ENCODE measurements at regions of chr12 and their contacts with region 1.

Region 1: DNA sequence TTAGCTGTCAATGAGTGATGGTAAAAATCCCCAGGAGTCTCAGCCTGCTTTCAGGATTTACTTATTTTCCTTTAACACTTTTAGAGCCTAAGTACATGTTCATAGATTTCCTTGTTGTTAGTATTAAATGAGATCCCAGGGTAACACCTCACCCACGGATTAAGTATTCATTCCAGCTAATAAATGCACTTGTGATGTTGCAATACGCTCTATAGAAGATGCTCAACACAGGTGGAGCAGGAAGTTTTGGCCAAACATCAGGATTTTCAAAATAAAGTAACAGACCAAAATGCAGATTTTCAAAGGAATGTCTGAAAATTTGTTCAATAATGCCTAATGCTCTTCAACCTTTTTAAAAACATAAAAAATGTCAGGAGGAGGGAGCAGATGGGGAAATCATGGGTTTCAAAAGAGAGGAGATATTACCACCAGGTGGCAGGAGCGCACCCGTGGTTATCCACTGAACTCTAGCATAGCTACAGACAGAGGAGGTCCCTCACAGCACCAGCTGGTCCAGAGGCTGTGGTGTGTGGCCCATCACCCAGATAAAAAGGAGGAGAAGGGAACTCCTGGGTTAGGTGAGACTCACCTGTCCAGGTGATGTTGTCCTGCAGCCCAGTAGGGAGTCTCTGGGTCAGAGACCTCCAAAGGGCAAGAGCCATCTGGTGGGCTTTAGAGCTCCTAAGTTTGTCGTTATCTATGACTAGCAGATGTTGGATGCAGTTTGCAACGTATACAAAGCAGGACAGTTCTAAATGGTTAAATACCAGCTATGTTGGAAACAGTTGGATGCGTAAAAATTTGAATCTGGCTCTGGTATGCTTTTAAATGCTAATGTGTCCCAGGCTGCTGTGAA is 1158.4 kb upstream of the TMEM132C start:
- DNase-seq: peak; percentile 60
- H3K4me3 ChIP-seq: no peak overlapping the region
- H3K27ac ChIP-seq: peak overlapping the region; percentile 21
- H3K4me1 ChIP-seq: peaks cover 17% of the 10 kb centered on the region
- H3K27me3 ChIP-seq: no peaks in the 10 kb centered on the region
- CTCF ChIP-seq: peak; percentile 61 to 77

Region 2: GRCh38 chr12:126926023-126926594 is 182.5 kb before region 1 on chr12:
- CTCF ChIA-PET with region 1: interaction called, 5 read pairs
- dilution Hi-C with region 1: no loop called
- in situ Hi-C with region 1: no loop called
- intact Hi-C with region 1: loop called (anchors 5 kb)
- DNase-seq: peak; percentile 4
- H3K4me3 ChIP-seq: no peak overlapping the region
- H3K27ac ChIP-seq: no peak overlapping the region
- H3K4me1 ChIP-seq: no peaks in the 10 kb centered on the region
- H3K27me3 ChIP-seq: no peaks in the 10 kb centered on the region
- CTCF ChIP-seq: peak in 1 of 2 donors; percentile 44

Region 3: DNA sequence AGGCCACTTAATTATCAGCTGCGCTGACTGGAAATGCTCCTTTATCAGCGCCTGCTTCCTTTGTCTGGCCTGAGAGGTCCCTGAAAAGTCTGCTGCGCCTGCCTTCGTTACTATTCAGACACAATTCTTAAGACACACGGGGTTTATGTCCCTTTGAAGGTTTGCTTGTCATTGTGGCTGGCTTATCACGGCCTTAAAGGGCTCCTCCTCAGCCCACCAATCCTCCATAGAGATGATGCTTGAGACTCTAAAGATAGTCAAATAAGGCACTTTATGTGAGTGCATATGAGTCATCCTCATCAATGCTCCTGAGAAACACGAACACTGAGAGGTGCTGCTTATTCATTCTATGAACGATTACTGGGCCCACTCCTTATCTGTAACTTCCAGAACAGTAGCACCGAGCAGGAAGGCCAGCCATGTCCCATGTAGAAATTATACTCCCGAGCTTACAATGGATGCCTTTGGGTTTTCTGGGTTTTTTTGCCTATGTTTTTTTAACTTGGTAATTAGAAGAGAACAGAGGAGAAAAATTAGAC is 109.8 kb before region 1 on chr12:
- CTCF ChIA-PET with region 1: no interaction called
- dilution Hi-C with region 1: no loop called
- in situ Hi-C with region 1: no loop called
- intact Hi-C with region 1: no loop called
- DNase-seq: no peak
- H3K4me3 ChIP-seq: no peak overlapping the region
- H3K27ac ChIP-seq: no peak overlapping the region
- H3K4me1 ChIP-seq: peaks cover 3% of the 10 kb centered on the region
- H3K27me3 ChIP-seq: no peaks in the 10 kb centered on the region
- CTCF ChIP-seq: no peak

Region 4: GRCh38 chr12:127145929-127146789 is 37.6 kb after region 1 on chr12:
- CTCF ChIA-PET with region 1: no interaction called
- dilution Hi-C with region 1: no loop called
- in situ Hi-C with region 1: no loop called
- intact Hi-C with region 1: loop called (anchors 1 kb)
- DNase-seq: peak; percentile 46
- H3K4me3 ChIP-seq: peak overlapping the region; percentile 6 to 73 (median 55)
- H3K27ac ChIP-seq: peak overlapping the region; percentile 35
- H3K4me1 ChIP-seq: peaks cover 12% of the 10 kb centered on the region
- H3K27me3 ChIP-seq: no peaks in the 10 kb centered on the region
- CTCF ChIP-seq: peak in 1 of 2 donors; percentile 25

Region 5: DNA sequence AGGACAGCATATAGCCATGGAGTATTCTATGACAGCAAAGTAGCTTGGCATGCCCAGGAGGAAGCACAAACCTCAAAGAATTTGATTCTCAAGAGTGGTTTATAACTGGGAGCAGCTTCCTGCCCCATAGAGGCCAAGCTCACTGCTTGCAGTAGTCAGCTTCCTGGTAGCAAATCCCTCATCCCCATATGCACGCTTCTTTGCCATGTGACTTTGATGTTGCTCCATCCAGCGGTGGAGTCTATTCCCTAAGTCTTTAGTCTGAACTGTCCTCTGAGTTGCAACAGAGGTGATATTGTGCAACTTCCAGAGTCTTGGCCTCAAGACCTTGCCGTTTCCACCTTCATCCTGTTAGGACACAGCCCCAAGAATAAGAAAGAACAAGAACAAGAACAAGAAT is 161.6 kb after region 1 on chr12:
- CTCF ChIA-PET with region 1: no interaction called
- dilution Hi-C with region 1: no loop called
- in situ Hi-C with region 1: no loop called
- intact Hi-C with region 1: loop called (anchors 1 kb)
- DNase-seq: peak; percentile 68
- H3K4me3 ChIP-seq: no peak overlapping the region
- H3K27ac ChIP-seq: peak overlapping the region; percentile 53
- H3K4me1 ChIP-seq: peaks cover 45% of the 10 kb centered on the region
- H3K27me3 ChIP-seq: no peaks in the 10 kb centered on the region
- CTCF ChIP-seq: no peak

Region 6: GRCh38 chr12:127293507-127294310 is 185.1 kb after region 1 on chr12:
- CTCF ChIA-PET with region 1: interaction called, 12 read pairs
- dilution Hi-C with region 1: no loop called
- in situ Hi-C with region 1: loop called (anchors 5 to 10 kb)
- intact Hi-C with region 1: loop called (anchors 1 kb)
- DNase-seq: peak; percentile 69
- H3K4me3 ChIP-seq: no peak overlapping the region
- H3K27ac ChIP-seq: no peak overlapping the region
- H3K4me1 ChIP-seq: peaks cover 5% of the 10 kb centered on the region
- H3K27me3 ChIP-seq: no peaks in the 10 kb centered on the region
- CTCF ChIP-seq: peak; percentile 98 to 99

Region 7: DNA sequence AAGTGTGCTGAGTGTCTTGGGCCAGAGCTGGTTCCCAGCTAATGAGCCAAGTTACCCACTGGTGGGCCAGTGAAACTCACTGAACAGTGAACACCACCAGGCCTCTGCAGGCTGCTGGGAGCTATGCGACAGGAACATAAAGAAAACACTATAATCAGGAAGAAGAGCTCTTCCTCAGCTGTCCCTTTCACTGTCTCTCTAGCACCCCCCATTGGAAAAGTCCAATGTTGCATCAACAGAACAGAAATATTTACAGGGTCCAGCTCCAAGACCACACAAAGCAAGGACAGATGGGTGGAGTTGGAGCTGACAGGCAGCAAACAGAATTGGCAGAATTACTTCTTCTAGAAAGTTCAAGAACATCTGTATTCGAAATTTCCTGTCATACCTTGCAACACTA is 254.8 kb after region 1 on chr12:
- CTCF ChIA-PET with region 1: interaction called, 7 read pairs
- dilution Hi-C with region 1: no loop called
- in situ Hi-C with region 1: no loop called
- intact Hi-C with region 1: loop called (anchors 1 kb)
- DNase-seq: peak; percentile 31
- H3K4me3 ChIP-seq: no peak overlapping the region
- H3K27ac ChIP-seq: no peak overlapping the region
- H3K4me1 ChIP-seq: no peaks in the 10 kb centered on the region
- H3K27me3 ChIP-seq: no peaks in the 10 kb centered on the region
- CTCF ChIP-seq: peak; percentile 58 to 75

Region 8: GRCh38 chr12:127438512-127439244 is 330.1 kb after region 1 on chr12:
- CTCF ChIA-PET with region 1: no interaction called
- dilution Hi-C with region 1: no loop called
- in situ Hi-C with region 1: no loop called
- intact Hi-C with region 1: no loop called
- DNase-seq: no peak
- H3K4me3 ChIP-seq: no peak overlapping the region
- H3K27ac ChIP-seq: no peak overlapping the region
- H3K4me1 ChIP-seq: no peaks in the 10 kb centered on the region
- H3K27me3 ChIP-seq: no peaks in the 10 kb centered on the region
- CTCF ChIP-seq: no peak

Measured in mammary epithelial cell (primary cell).